GM18951 (cell line): ENCODE measurements at regions of chr15 and their contacts with region 1.

Region 1: GRCh38 chr15:83747050-83747717 is 93.3 kb downstream of the ADAMTSL3 start:
- POLR2A ChIP-seq: no peak

Region 2: GRCh38 chr15:84035399-84035766 is 288.2 kb after region 1 on chr15:
- in situ Hi-C with region 1: loop called (anchors 25 kb)
- POLR2A ChIP-seq: no peak